ENCODE measurements at regions of chr3 and their contacts with region 1.

Region 1: DNA sequence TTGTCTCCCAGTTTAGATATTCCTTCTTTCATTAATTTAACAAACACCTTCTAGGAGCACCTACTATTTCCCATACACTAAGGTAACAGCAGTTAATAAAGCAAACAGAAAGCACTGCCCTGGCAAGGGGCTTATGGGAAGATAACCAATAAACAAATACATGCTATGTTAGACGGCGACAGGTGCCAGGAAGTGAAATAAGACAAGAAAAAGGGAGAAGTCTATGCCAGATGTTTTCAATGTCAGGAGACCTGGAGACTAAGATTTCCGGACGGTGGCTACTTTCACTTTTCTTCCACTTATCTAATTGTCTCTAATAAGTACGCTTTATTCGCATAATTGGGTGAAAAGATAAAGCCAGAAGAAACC is 32.5 kb upstream of the ZNF445 start:
- DNase-seq: no peak
- H3K4me3 ChIP-seq: peak overlapping the region; percentile 52 to 99 (median 88)
- H3K27ac ChIP-seq: peak overlapping the region in 57 of 59 donors; percentile 6 to 95 (median 87)
- H3K27me3 ChIP-seq: no peaks in the 10 kb centered on the region
- CTCF ChIP-seq: no peak

Region 2: DNA sequence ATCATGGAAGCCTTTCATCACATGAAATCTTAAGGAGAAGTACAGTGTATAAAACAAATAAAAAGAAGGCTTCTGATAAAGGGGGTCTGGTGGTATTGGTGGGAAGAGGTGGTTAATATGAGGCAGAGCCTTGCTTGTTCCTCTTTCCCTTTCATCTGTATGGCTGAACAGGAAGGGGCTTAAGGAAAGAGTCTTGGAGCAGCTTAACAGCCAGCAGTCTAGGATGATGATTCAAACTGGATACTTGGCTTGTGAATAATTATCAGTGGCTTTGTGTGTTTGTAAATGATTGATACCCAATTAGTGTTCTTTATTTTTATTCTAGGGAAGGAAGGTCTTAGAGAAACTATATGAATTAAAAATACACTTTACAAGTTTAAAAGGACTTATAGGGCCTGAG is 200.5 kb before region 1 on chr3:
- intact Hi-C with region 1: no loop called
- DNase-seq: no peak
- H3K4me3 ChIP-seq: no peak overlapping the region
- H3K27ac ChIP-seq: no peak overlapping the region
- H3K27me3 ChIP-seq: peaks cover 0 to 5% (median 0%) of the 10 kb centered on the region in 45 donors
- CTCF ChIP-seq: no peak

Region 3: DNA sequence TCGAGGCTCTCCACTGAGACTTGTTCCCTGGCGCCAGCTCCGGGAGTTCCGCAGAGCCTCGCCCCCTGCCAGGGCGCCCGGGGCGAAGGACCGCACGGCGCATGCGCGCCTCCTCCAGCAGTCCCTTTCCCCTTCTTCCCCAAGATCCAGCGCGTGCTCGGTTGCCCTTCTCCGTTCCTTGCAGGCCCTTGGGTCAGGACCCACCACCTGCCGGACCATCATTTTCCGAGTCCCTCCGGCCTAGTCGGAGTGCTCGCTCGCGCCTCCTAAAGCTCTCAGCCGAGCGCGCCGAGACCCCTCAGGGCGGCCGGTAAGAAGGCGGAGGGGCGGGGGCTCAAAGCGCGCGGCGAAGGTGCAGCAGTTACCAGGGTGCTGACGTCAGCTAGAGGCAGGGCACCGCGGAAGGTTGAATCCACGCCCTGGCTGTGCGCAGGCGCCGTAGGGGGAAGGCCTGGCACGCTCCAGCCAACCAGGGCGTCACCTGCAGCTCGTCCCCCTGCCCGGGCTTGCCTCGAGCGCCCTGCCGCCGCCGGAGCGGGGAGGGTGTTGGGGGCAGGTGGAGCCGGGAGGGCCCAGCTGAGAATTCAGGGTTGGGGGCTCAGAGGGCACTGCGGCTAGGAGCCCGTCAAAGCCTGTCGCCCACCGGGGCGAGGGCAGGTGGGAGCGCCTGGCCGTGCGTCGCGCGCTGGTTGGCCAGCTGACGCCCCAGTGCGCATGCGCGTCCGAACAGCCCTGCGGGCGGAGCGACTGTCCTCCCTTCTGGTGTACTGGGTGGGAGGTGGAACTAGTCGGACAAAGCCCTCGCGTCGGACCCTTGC is 171.8 kb before region 1 on chr3 and contains the start of gene TCAIM:
- intact Hi-C with region 1: loop called in 1 of 2 experiments (anchors 1 kb)
- DNase-seq: peak; percentile 86 to 97 (median 94)
- H3K4me3 ChIP-seq: peak within 1 kb of the TSS; percentile 60 to 97 (median 85)
- H3K27ac ChIP-seq: peak within 1 kb of the TSS; percentile 84 to 100 (median 98)
- H3K27me3 ChIP-seq: no peaks in the 10 kb centered on the region
- CTCF ChIP-seq: peak in 15 of 56 donors; percentile 2 to 30 (median 15)
- total RNA-seq, gene TCAIM: 24.2 to 49.5 (median 35.3) TPM

Region 4: GRCh38 chr3:44554626-44555592 is 44.9 kb after region 1 on chr3 and contains the start of gene ZKSCAN7:
- intact Hi-C with region 1: loop called in 1 of 2 experiments (anchors 5 kb)
- DNase-seq: peak; percentile 37 to 83 (median 64)
- H3K4me3 ChIP-seq: peak within 1 kb of the TSS; percentile 56 to 94 (median 81)
- H3K27ac ChIP-seq: peak within 1 kb of the TSS in 57 of 59 donors; percentile 37 to 92 (median 78)
- H3K27me3 ChIP-seq: peaks cover 0 to 28% (median 0%) of the 10 kb centered on the region in 45 donors
- CTCF ChIP-seq: peak in 28 of 56 donors; percentile 8 to 39 (median 22)
- total RNA-seq, gene ZKSCAN7: 2.6 to 10.6 (median 6.0) TPM

Region 5: GRCh38 chr3:44712455-44713075 is 202.6 kb after region 1 on chr3 and contains the start of gene ZNF502:
- intact Hi-C with region 1: loop called in 1 of 2 experiments (anchors 5 kb)
- DNase-seq: peak; percentile 86 to 95 (median 92)
- H3K4me3 ChIP-seq: peak within 1 kb of the TSS; percentile 54 to 99 (median 84)
- H3K27ac ChIP-seq: peak within 1 kb of the TSS in 26 of 59 donors; percentile 1 to 81 (median 50)
- H3K27me3 ChIP-seq: peaks cover 0 to 11% (median 0%) of the 10 kb centered on the region in 45 donors
- CTCF ChIP-seq: peak in 51 of 56 donors; percentile 22 to 65 (median 44)
- total RNA-seq, gene ZNF502: 2.8 to 9.2 (median 5.1) TPM

Region 6: DNA sequence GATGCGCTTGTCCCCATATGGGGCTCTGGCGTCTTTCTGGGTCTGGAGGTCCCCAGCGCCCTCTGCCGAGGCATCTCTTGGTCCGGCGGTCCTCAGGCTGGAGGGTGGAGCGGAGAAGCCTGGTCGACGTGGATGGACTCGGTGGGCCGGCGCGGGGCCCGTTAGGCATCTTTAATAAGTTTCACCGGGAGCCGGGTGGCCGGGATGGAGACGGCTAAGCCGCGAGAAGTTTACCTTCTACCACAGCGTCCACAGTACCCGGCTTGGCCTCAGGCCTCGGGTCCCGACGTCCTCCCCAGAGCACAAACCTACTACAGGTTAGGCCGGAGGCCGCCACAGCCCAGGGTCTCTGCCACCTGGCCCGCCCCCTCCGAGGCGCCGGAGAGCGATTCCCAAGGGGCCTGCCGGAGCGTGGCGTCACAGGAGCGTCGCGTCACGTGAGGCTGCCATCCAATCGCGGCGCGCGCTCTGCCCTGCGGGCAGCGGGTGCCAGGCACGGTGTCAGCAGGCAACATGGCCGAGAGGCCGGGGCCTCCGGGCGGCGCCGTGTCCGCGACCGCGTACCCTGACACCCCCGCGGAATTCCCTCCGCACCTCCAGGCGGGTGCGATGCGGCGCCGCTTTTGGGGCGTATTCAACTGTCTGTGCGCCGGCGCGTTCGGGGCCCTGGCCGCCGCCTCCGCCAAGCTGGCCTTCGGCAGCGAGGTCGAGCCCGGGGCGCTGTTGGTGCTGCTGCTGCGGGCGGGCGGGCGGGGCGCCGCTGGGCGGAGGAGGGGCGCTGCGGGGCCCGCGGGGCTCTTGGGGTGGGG is 351.6 kb after region 1 on chr3 and contains the start of gene TMEM42:
- intact Hi-C with region 1: loop called (anchors 2 to 5 kb)
- DNase-seq: peak; percentile 88 to 97 (median 91)
- H3K4me3 ChIP-seq: peak within 1 kb of the TSS; percentile 55 to 98 (median 83)
- H3K27ac ChIP-seq: peak within 1 kb of the TSS; percentile 82 to 98 (median 94)
- H3K27me3 ChIP-seq: no peaks in the 10 kb centered on the region
- CTCF ChIP-seq: peak in 40 of 56 donors; percentile 2 to 50 (median 28)
- total RNA-seq, gene TMEM42: 13.8 to 39.0 (median 21.6) TPM

Measured in dorsolateral prefrontal cortex (tissue), 120 donors.